Ascending aorta (tissue), 2 donors: ENCODE measurements at regions of chr15 and their contacts with region 1.

Region 1: GRCh38 chr15:89023311-89023961 is 64.8 kb upstream of the ABHD2 start:
- DNase-seq: no peak
- H3K4me3 ChIP-seq: no peak overlapping the region
- H3K27ac ChIP-seq: peak overlapping the region; percentile 93 to 95
- H3K4me1 ChIP-seq: peaks cover 16 to 44% of the 10 kb centered on the region in 2 donors
- H3K27me3 ChIP-seq: no peaks in the 10 kb centered on the region
- CTCF ChIP-seq: no peak

Region 2: DNA sequence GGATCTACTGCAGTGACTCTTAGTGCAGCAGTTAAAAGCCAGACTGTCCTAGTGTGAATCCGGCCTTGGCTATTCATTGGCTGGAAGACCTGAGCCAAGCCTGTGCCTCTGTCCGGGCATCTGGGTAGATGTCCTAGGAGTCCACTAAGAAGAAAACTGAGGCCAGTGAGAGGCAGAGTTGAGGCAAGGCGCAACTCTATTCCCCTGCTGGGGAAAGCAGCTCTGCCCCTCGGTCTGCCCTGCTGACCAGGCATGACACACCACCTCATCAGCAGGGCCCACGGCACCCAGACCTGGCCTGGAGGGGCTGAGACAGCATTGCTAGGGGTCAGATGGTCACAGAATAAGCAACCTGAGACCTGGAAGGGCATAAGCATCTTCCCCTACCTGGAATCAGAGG is 18.1 kb after region 1 on chr15:
- intact Hi-C with region 1: loop called (anchors 2 kb)
- DNase-seq: peak in 1 of 2 donors; percentile 62
- H3K4me3 ChIP-seq: peak overlapping the region; percentile 6 to 20
- H3K27ac ChIP-seq: peak overlapping the region; percentile 59 to 82
- H3K4me1 ChIP-seq: peaks cover 2 to 20% of the 10 kb centered on the region in 2 donors
- H3K27me3 ChIP-seq: no peaks in the 10 kb centered on the region
- CTCF ChIP-seq: no peak

Region 3: GRCh38 chr15:89052474-89052873 is 29.0 kb after region 1 on chr15:
- intact Hi-C with region 1: loop called (anchors 2 kb)
- DNase-seq: peak in 1 of 2 donors; percentile 58
- H3K4me3 ChIP-seq: no peak overlapping the region
- H3K27ac ChIP-seq: peak overlapping the region; percentile 76 to 83
- H3K4me1 ChIP-seq: peaks cover 0 to 32% of the 10 kb centered on the region in 2 donors
- H3K27me3 ChIP-seq: no peaks in the 10 kb centered on the region
- CTCF ChIP-seq: no peak

Region 4: GRCh38 chr15:89282631-89283030 is 259.2 kb after region 1 on chr15:
- intact Hi-C with region 1: no loop called
- DNase-seq: no peak
- H3K4me3 ChIP-seq: no peak overlapping the region
- H3K27ac ChIP-seq: no peak overlapping the region
- H3K4me1 ChIP-seq: no peaks in the 10 kb centered on the region
- H3K27me3 ChIP-seq: no peaks in the 10 kb centered on the region
- CTCF ChIP-seq: no peak